PC-3 (cell line): ENCODE measurements at regions of chr1 and their contacts with region 1.

Region 1: DNA sequence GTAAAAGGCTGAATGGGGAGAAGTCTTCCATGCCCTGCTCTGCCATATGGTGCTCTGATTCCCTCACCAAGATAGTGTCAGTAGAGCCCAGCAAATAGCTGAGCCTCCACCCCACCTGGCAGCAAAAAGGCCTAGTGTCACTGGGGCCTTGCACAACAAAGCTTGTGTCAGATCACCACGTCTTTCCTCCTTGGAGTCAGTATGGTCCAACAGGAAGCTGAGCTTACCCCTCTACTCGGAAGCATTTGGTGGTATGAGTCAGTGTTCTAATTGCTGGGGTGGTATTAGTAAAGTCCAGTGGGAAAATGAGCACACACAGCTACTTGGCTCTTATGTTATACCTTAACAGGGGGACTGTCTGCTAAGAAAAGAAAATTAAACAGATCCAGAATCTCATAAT is 18.7 kb upstream of the RRP15 start:
- DNase-seq: peak; percentile 53
- ATAC-seq: peak; percentile 29; the same call in 1 of the 2 replicates
- H3K4me3 ChIP-seq: no peak overlapping the region
- H3K27ac ChIP-seq: no peak overlapping the region
- H3K4me1 ChIP-seq: no peaks in the 10 kb centered on the region
- H3K27me3 ChIP-seq: no peaks in the 10 kb centered on the region
- CTCF ChIP-seq: no peak

Region 2: DNA sequence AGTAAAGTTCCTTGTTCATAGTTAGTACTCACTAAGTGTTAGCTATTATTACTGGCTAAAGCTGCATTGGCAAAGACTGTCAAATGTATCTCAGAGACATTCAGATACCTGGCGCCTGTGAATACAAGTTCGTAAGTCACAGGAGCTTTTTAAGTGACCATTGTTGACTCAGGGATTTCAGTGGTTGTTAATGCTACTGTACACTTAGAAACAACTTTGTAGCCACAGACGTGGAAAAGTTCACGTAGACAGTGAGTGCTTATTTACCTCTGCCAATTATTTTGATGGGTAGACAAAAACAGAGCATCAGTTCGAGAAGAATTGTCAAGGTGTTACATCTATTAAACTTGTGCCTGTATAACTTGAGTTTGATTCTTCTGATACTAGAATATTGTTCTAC is 40.4 kb before region 1 on chr1:
- CTCF ChIA-PET with region 1: no interaction called
- POLR2A ChIA-PET with region 1: no interaction called
- intact Hi-C with region 1: no loop called
- DNase-seq: no peak
- ATAC-seq: no peak
- H3K4me3 ChIP-seq: no peak overlapping the region
- H3K27ac ChIP-seq: no peak overlapping the region
- H3K4me1 ChIP-seq: no peaks in the 10 kb centered on the region
- H3K27me3 ChIP-seq: no peaks in the 10 kb centered on the region
- CTCF ChIP-seq: no peak

Region 3: GRCh38 chr1:218874313-218874712 is 608.0 kb after region 1 on chr1:
- CTCF ChIA-PET with region 1: no interaction called
- POLR2A ChIA-PET with region 1: interaction called, 15 read pairs
- intact Hi-C with region 1: no loop called
- DNase-seq: peak; percentile 98
- ATAC-seq: peak; percentile 89
- H3K4me3 ChIP-seq: peak overlapping the region; percentile 7; the same call in 1 of the 2 replicates
- H3K27ac ChIP-seq: peak overlapping the region; percentile 83
- H3K4me1 ChIP-seq: peaks cover 35% of the 10 kb centered on the region
- H3K27me3 ChIP-seq: no peaks in the 10 kb centered on the region
- CTCF ChIP-seq: no peak